AG04449 (cell line): ENCODE measurements at regions of chr17 and their contacts with region 1.

Region 1: GRCh38 chr17:58249270-58250133 is 11.1 kb downstream of the LPO start:
- DNase-seq: no peak
- H3K4me3 ChIP-seq: peak overlapping the region; percentile 62
- CTCF ChIP-seq: peak; percentile 95

Region 2: DNA sequence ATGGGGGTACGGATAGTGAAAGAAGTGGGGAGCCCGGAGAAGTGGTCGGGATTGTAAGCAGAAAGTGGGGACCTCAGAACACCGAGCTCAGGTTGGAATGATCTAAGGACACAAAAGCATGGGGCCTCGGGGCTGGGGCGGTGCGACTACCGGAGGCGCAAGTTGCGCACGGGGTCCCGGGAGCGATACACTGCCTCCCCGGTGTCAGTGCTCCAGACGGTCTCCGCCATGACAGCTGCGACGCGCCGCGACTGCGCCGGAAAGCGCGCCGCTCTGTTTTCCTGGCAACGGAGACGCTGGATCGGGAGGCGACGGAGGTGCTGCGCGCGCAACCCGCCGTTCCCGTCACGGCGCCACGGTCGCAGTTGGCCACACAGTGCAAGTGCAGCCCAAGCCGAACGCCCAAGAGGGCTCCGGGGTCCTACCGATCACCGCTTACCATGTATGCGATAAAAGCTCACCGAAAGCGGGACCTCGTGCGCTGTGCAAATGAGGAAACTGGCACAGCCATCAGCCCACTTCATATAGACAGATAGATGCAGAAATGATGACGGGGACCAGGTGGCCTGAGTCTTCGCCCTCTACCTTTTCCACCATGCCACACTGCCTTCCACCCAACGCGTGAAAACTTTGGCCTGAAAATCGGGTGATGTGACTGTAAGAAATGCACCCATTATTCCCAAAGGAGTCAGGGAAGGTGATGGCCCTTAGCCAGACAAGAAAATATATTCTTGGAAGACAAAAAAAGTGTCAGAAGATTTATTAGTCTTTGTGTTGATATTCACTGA is 30.3 kb before region 1 on chr17 and contains the start of gene MKS1:
- CTCF ChIA-PET with region 1: interaction called, 21 read pairs
- POLR2A ChIA-PET with region 1: no interaction called
- DNase-seq: peak; percentile 29
- H3K4me3 ChIP-seq: peak within 1 kb of the TSS; percentile 94
- CTCF ChIP-seq: peak; percentile 77

Region 3: GRCh38 chr17:58224315-58224714 is 25.2 kb before region 1 on chr17:
- CTCF ChIA-PET with region 1: interaction called, 21 read pairs
- POLR2A ChIA-PET with region 1: no interaction called
- DNase-seq: peak; percentile 28
- H3K4me3 ChIP-seq: no peak overlapping the region
- CTCF ChIP-seq: no peak

Region 4: GRCh38 chr17:58232707-58233156 is 16.8 kb before region 1 on chr17:
- CTCF ChIA-PET with region 1: interaction called, 72 read pairs
- POLR2A ChIA-PET with region 1: no interaction called
- DNase-seq: peak; percentile 71
- H3K4me3 ChIP-seq: no peak overlapping the region
- CTCF ChIP-seq: no peak

Region 5: GRCh38 chr17:58238139-58238634 is 11.3 kb before region 1 on chr17 and contains the start of gene LPO:
- CTCF ChIA-PET with region 1: interaction called, 72 read pairs
- POLR2A ChIA-PET with region 1: no interaction called
- DNase-seq: no peak
- H3K4me3 ChIP-seq: no peak within 1 kb of the TSS
- CTCF ChIP-seq: no peak